ENCODE measurements at regions of chr13 and their contacts with region 1.

Region 1: GRCh38 chr13:110412132-110412914 is 105.2 kb downstream of the COL4A2 start:
- DNase-seq: peak; percentile 99
- H3K4me3 Mint-ChIP-seq: no peak overlapping the region
- H3K27ac Mint-ChIP-seq: peak overlapping the region; percentile 76
- H3K4me1 Mint-ChIP-seq: peaks cover 40% of the 10 kb centered on the region
- H3K27me3 Mint-ChIP-seq: no peaks in the 10 kb centered on the region
- CTCF ChIP-seq: peak; percentile 90

Region 2: DNA sequence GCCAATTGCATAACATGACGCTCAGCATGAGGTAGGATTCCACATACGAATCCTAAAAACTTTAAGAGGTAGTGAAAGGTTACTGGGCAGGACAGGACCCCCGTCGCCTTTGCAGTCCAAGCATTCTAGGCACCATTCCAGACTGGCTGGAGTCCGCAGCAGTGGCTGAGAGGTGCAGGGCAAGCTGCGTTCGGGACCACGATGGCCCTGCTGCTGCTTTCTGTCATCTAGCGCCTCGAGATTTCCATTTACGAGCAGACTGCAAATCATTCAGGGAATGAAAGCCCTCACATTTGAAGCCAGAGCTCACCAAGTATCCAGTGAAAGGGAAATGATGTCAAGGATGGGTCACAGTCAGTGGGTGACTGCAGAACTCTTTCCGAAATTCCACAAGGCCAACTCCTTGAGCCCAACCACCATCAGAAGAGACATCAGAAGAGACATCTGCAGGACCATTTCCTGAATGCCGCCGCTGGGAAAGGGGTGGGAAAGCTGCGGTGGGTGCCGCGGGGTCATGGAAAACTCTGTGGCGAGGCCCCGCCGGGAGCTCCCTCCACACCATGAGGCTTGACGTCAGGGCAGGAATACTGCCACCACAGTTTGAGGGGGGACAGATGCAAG is 193.6 kb before region 1 on chr13:
- CTCF ChIA-PET with region 1: interaction called, 32 read pairs
- POLR2A ChIA-PET with region 1: interaction called, 9 read pairs
- intact Hi-C with region 1: loop called (anchors 1 kb)
- DNase-seq: no peak
- H3K4me3 Mint-ChIP-seq: no peak overlapping the region
- H3K27ac Mint-ChIP-seq: no peak overlapping the region
- H3K4me1 Mint-ChIP-seq: no peaks in the 10 kb centered on the region
- H3K27me3 Mint-ChIP-seq: no peaks in the 10 kb centered on the region
- CTCF ChIP-seq: no peak

Region 3: DNA sequence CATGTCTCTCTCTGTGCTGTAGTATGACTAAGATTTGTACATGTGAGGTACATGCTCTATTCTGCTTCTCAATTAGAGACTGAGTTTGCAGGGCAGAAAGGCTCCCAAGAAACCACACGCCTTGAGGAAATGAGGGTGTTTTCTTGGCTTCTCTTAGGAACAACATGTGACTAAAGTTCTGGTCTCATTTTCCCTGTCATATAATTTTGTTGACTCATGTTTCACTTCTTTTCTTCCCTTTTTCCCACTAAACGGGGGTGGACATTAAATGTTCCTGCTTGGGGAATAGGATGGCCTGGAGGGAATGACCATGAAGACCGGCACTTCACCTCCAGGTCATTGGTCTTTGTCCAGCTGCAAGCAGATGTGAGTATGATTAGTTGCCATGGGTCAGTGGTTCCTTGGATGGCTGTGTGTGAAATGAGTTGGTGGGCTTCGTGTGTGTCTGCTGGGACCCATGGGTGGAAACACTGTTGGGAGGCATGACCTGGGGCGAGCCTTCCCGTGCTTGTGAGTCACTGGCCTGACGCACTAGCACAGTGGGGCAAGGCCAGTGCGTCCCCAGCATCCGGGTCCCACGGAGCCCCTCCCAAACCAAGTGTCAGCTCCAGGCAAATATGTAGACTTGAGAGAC is 161.9 kb before region 1 on chr13:
- CTCF ChIA-PET with region 1: interaction called, 3 read pairs
- POLR2A ChIA-PET with region 1: no interaction called
- intact Hi-C with region 1: loop called (anchors 1 kb)
- DNase-seq: peak; percentile 77
- H3K4me3 Mint-ChIP-seq: no peak overlapping the region
- H3K27ac Mint-ChIP-seq: peak overlapping the region; percentile 86
- H3K4me1 Mint-ChIP-seq: peaks cover 19% of the 10 kb centered on the region
- H3K27me3 Mint-ChIP-seq: no peaks in the 10 kb centered on the region
- CTCF ChIP-seq: no peak

Region 4: DNA sequence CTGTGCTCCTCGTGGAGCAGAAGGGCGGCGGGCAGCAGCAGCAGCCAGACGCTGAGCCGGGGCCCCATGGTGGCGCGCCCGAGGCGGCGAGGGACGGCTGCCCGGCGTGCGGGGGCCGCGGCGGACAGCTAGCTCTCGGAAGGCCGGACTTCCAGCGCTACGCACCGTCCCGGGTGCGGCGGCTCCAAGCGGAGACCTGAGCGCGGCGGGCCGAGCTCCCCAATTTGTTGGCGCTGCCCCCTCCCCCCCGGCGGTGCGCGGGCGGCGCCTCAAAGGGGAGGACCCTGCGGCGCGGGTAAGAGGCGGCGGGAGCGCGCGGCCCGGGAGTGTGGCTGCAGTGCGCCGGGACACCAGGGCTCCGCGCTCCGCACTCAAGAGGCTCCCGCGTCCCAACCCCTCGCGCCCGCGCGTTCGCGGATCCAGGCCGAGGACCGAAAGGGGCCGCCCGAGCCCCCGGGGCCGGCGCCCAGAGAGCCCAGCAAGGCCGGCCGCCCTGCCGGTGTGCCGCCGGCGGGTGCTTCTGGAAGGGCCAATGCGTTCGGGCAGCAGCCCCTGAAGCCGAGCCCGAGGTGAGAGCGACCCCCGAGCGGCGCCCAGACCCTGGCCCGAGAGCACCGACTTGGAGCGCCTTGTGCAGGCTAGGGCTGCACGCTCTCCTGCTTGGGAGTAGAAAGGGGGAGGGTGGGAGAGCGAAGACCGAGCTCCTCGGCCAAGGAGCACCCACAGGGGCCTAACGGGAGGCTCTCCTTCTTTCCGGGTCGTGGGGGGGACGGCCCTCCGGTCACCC is 105.2 kb before region 1 on chr13 and contains the starts of genes COL4A1 and COL4A2:
- CTCF ChIA-PET with region 1: interaction called, 6 read pairs
- POLR2A ChIA-PET with region 1: interaction called, 7 read pairs
- intact Hi-C with region 1: loop called (anchors 1 kb)
- DNase-seq: peak; percentile 77
- H3K4me3 Mint-ChIP-seq: peak within 1 kb of the TSS; percentile 90
- H3K27ac Mint-ChIP-seq: peak within 1 kb of the TSS; percentile 5
- H3K4me1 Mint-ChIP-seq: peaks cover 32% of the 10 kb centered on the region
- H3K27me3 Mint-ChIP-seq: no peaks in the 10 kb centered on the region
- CTCF ChIP-seq: no peak
- total RNA-seq, gene COL4A1: 25.9 and 42.1 TPM in 2 replicates
- total RNA-seq, gene COL4A2: 54.6 and 66.0 TPM in 2 replicates

Region 5: DNA sequence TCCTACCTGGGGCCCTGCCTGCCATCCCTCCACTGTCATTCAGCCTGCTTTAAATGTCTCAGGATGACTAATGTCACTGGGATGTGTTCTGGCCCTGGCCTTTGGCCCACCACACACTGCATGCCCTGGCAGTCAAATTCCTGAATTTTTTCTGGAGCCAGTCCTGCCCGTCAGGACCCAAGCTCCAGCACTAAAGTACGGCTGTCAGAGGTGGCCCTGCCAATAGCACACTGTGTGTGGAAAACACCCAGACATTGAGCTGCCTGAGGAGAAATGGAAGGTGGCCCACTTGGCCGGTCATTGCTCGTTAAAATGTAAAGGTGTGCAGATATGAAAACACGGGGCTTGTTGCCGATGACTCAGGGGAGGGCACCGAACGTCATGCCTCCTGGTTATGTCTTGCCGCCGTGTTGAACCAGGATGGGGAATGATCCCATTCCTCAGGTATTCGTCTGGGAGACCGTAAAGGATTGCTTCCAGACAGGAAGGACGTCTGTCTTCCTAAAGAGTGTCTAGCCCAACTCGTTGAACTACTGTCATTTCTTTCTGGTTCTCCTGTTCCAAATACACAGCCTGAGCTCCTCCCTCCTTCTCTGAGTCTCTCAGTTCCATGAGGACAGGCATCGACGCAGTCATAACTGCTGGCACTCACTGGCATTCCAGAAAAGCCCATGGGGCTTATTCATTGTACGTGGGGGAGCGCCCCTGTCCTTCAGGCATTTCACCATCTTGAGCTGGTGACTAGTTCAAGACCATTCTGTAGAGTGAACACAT is 64.6 kb before region 1 on chr13:
- CTCF ChIA-PET with region 1: interaction called, 9 read pairs
- POLR2A ChIA-PET with region 1: interaction called, 6 read pairs
- intact Hi-C with region 1: loop called (anchors 1 kb)
- DNase-seq: peak; percentile 92
- H3K4me3 Mint-ChIP-seq: peak overlapping the region; percentile 72
- H3K27ac Mint-ChIP-seq: peak overlapping the region; percentile 95
- H3K4me1 Mint-ChIP-seq: peaks cover 62% of the 10 kb centered on the region
- H3K27me3 Mint-ChIP-seq: no peaks in the 10 kb centered on the region
- CTCF ChIP-seq: no peak

Region 6: GRCh38 chr13:110396913-110397381 is 15.4 kb before region 1 on chr13:
- CTCF ChIA-PET with region 1: interaction called, 6 read pairs
- POLR2A ChIA-PET with region 1: interaction called, 8 read pairs
- intact Hi-C with region 1: loop called (anchors 1 kb)
- DNase-seq: peak; percentile 97
- H3K4me3 Mint-ChIP-seq: peak overlapping the region; percentile 72
- H3K27ac Mint-ChIP-seq: peak overlapping the region; percentile 98
- H3K4me1 Mint-ChIP-seq: peaks cover 32% of the 10 kb centered on the region
- H3K27me3 Mint-ChIP-seq: no peaks in the 10 kb centered on the region
- CTCF ChIP-seq: no peak

Region 7: DNA sequence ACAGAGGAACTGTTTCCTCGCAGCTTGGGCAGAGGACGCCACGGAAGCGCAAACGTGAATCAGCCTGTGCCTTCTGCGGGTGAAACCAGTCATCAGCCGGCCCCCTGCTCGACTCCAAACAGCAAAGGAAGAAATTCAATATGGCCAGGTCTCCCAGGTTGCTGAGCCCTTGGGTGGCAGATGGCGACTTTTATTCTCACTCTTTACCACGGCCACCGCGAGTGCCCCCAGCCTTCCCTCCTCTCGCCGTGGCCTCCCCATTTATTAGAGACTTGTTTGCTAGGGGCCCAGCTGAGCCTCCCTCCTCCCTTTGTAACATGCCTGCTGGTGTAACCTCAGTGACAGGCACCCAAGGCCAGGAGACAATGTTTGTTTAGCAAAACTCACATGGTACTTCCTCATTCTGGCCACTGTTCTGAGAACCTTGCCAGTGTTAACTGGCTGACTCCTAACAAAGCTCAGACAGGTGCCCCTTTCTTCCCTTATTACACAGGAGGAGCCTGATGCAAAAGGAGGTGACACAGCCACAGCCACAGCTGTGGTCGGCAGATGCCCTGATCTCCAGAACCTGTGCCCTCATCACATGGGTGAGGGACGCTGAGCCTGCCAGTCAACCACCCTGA is 143.4 kb after region 1 on chr13:
- CTCF ChIA-PET with region 1: no interaction called
- POLR2A ChIA-PET with region 1: no interaction called
- intact Hi-C with region 1: no loop called
- DNase-seq: no peak
- H3K4me3 Mint-ChIP-seq: no peak overlapping the region
- H3K27ac Mint-ChIP-seq: no peak overlapping the region
- H3K4me1 Mint-ChIP-seq: peaks cover 10% of the 10 kb centered on the region
- H3K27me3 Mint-ChIP-seq: no peaks in the 10 kb centered on the region
- CTCF ChIP-seq: no peak

Measured in MCF 10A (cell line).